CD4-positive, alpha-beta T cell (primary cell): ENCODE measurements at regions of chr6 and their contacts with region 1.

Region 1: GRCh38 chr6:73653571-73654424 is at the start of gene SLC17A5:
- DNase-seq: peak; percentile 71 to 95 (median 87)
- ATAC-seq: peak; percentile 85
- H3K4me3 ChIP-seq: peak within 1 kb of the TSS; percentile 94
- H3K4me3 Mint-ChIP-seq: peak within 1 kb of the TSS; percentile 99
- H3K27ac ChIP-seq: peak within 1 kb of the TSS; percentile 93 to 99
- H3K27ac Mint-ChIP-seq: peak within 1 kb of the TSS; percentile 95
- H3K4me1 ChIP-seq: peaks cover 15% of the 10 kb centered on the region
- H3K4me1 Mint-ChIP-seq: peaks cover 42% of the 10 kb centered on the region
- H3K27me3 ChIP-seq: no peaks in the 10 kb centered on the region
- H3K27me3 Mint-ChIP-seq: no peaks in the 10 kb centered on the region
- CTCF ChIP-seq: no peak
- total RNA-seq, gene SLC17A5: 5.3 to 6.2 TPM

Region 2: DNA sequence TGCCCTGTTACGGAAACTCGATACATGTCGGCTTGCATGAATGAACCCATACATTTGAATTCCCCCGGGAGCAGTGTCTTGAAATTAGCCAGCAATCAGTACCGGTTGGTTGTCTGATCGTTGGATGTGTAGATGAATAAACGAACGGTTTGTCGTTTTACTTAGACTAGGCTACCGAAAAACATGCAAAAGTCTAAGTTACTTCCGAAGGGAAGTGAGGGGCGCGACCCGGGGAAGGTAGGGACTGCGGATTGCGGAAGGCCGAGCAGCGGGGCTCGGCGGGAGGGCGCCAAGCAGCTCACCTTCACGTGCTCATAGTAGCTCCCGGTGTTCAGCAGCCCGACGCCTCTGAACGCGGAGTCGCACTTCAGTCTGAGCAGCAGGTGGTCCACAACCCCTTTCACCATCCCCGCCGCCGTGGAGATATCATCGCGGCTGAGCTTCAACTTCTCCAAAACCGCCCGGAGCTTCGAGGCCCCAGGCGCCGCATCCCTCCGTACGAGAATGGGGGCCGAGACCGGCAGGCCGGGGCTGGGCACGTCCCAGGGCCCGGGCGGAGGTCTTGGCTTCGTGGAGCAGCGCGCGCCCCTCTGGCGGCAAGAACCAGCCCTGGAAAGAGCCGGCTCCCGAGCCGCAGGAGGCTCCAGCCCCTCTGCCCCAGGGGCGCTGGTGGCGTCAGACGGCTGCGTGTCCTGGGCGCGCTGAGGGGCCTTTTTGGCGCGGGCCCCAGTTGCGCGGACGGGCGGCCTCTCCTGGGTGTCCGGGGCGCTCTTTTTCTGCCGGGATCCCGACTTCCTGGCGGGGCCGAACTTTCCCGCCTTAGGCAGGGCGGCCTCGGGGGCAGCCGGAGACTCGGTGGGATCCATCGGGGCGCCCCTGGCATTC is 202.3 kb before region 1 on chr6:
- CTCF ChIA-PET with region 1: no interaction called
- POLR2A ChIA-PET with region 1: interaction called, 13 read pairs
- intact Hi-C with region 1: no loop called
- DNase-seq: peak; percentile 9 to 74 (median 31)
- ATAC-seq: peak; percentile 53
- H3K4me3 ChIP-seq: peak overlapping the region; percentile 87
- H3K4me3 Mint-ChIP-seq: peak overlapping the region; percentile 92
- H3K27ac ChIP-seq: peak overlapping the region; percentile 69 to 85
- H3K27ac Mint-ChIP-seq: peak overlapping the region; percentile 86
- H3K4me1 ChIP-seq: peaks cover 54% of the 10 kb centered on the region
- H3K4me1 Mint-ChIP-seq: peaks cover 32% of the 10 kb centered on the region
- H3K27me3 ChIP-seq: no peaks in the 10 kb centered on the region
- H3K27me3 Mint-ChIP-seq: no peaks in the 10 kb centered on the region
- CTCF ChIP-seq: no peak

Region 3: DNA sequence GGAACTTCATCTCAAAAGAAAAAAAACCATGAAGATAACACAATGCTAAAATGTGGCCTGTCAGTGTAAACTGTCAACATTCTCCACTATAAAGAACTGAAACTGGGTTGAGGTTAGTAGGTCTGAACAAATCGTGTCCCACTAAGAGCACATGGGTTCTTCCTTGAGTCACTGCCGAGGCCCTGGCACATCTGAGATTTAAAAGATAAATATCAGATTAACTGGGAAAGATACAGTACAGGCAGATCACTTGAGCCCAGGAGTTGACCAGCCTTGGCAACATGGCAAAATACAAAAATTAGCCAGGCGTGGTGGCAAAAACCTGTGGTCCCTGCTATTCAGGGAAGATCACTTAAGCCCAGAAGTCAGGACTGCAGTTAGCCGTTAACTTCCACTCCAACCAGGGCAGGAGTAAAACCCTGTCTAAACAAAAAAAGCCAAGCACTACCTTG is 138.6 kb before region 1 on chr6:
- CTCF ChIA-PET with region 1: interaction called, 12 read pairs
- POLR2A ChIA-PET with region 1: interaction called, 140 read pairs
- intact Hi-C with region 1: loop called (anchors 1 to 2 kb)
- DNase-seq: peak in 3 of 14 experiments; percentile 28 to 48 (median 47)
- ATAC-seq: no peak
- H3K4me3 ChIP-seq: no peak overlapping the region
- H3K4me3 Mint-ChIP-seq: peak overlapping the region; percentile 81
- H3K27ac ChIP-seq: peak overlapping the region in 1 of 2 donors; percentile 16
- H3K27ac Mint-ChIP-seq: peak overlapping the region; percentile 87
- H3K4me1 ChIP-seq: peaks cover 47% of the 10 kb centered on the region
- H3K4me1 Mint-ChIP-seq: peaks cover 59% of the 10 kb centered on the region
- H3K27me3 ChIP-seq: no peaks in the 10 kb centered on the region
- H3K27me3 Mint-ChIP-seq: no peaks in the 10 kb centered on the region
- CTCF ChIP-seq: no peak

Region 4: GRCh38 chr6:73585566-73586415 is 68.0 kb before region 1 on chr6:
- CTCF ChIA-PET with region 1: interaction called, 4 read pairs
- POLR2A ChIA-PET with region 1: interaction called, 10 read pairs
- intact Hi-C with region 1: no loop called
- DNase-seq: peak in 8 of 14 experiments; percentile 6 to 87 (median 36)
- ATAC-seq: peak; percentile 86
- H3K4me3 ChIP-seq: peak overlapping the region; percentile 48
- H3K4me3 Mint-ChIP-seq: peak overlapping the region; percentile 75
- H3K27ac ChIP-seq: peak overlapping the region; percentile 89 to 93
- H3K27ac Mint-ChIP-seq: peak overlapping the region; percentile 98
- H3K4me1 ChIP-seq: peaks cover 15% of the 10 kb centered on the region
- H3K4me1 Mint-ChIP-seq: peaks cover 20% of the 10 kb centered on the region
- H3K27me3 ChIP-seq: no peaks in the 10 kb centered on the region
- H3K27me3 Mint-ChIP-seq: no peaks in the 10 kb centered on the region
- CTCF ChIP-seq: no peak

Region 5: GRCh38 chr6:75243333-75244062 is 1589.7 kb after region 1 on chr6 and contains the start of gene COX7A2:
- CTCF ChIA-PET with region 1: no interaction called
- POLR2A ChIA-PET with region 1: interaction called, 5 read pairs
- intact Hi-C with region 1: loop called in 1 of 2 experiments (anchors 10 kb)
- DNase-seq: peak; percentile 73 to 96 (median 78)
- ATAC-seq: peak; percentile 95
- H3K4me3 ChIP-seq: peak within 1 kb of the TSS; percentile 88
- H3K4me3 Mint-ChIP-seq: peak within 1 kb of the TSS; percentile 99
- H3K27ac ChIP-seq: peak within 1 kb of the TSS; percentile 87 to 97
- H3K27ac Mint-ChIP-seq: peak within 1 kb of the TSS; percentile 95
- H3K4me1 ChIP-seq: peaks cover 24% of the 10 kb centered on the region
- H3K4me1 Mint-ChIP-seq: peaks cover 40% of the 10 kb centered on the region
- H3K27me3 ChIP-seq: no peaks in the 10 kb centered on the region
- H3K27me3 Mint-ChIP-seq: peaks cover 17% of the 10 kb centered on the region
- CTCF ChIP-seq: no peak
- total RNA-seq, gene COX7A2: 189 to 195 TPM

Region 6: GRCh38 chr6:75284632-75285286 is 1631.0 kb after region 1 on chr6 and contains the start of gene TMEM30A:
- CTCF ChIA-PET with region 1: interaction called, 3 read pairs
- POLR2A ChIA-PET with region 1: interaction called, 13 read pairs
- intact Hi-C with region 1: loop called in 1 of 2 experiments (anchors 2 kb)
- DNase-seq: peak; percentile 90 to 100 (median 95)
- ATAC-seq: peak; percentile 96
- H3K4me3 ChIP-seq: peak within 1 kb of the TSS; percentile 78
- H3K4me3 Mint-ChIP-seq: no peak within 1 kb of the TSS
- H3K27ac ChIP-seq: peak within 1 kb of the TSS; percentile 76 to 85
- H3K27ac Mint-ChIP-seq: no peak within 1 kb of the TSS
- H3K4me1 ChIP-seq: peaks cover 9% of the 10 kb centered on the region
- H3K4me1 Mint-ChIP-seq: peaks cover 47% of the 10 kb centered on the region
- H3K27me3 ChIP-seq: no peaks in the 10 kb centered on the region
- H3K27me3 Mint-ChIP-seq: no peaks in the 10 kb centered on the region
- CTCF ChIP-seq: no peak
- total RNA-seq, gene TMEM30A: 29.8 to 33.2 TPM

Region 7: GRCh38 chr6:75601304-75602245 is 1947.8 kb after region 1 on chr6 and contains the start of gene SENP6:
- CTCF ChIA-PET with region 1: no interaction called
- POLR2A ChIA-PET with region 1: interaction called, 9 read pairs
- intact Hi-C with region 1: loop called in 1 of 2 experiments (anchors 5 kb)
- DNase-seq: peak; percentile 51 to 91 (median 69)
- ATAC-seq: peak; percentile 72
- H3K4me3 ChIP-seq: peak within 1 kb of the TSS; percentile 73
- H3K4me3 Mint-ChIP-seq: peak within 1 kb of the TSS; percentile 96
- H3K27ac ChIP-seq: peak within 1 kb of the TSS; percentile 92 to 96
- H3K27ac Mint-ChIP-seq: peak within 1 kb of the TSS; percentile 99
- H3K4me1 ChIP-seq: peaks cover 36% of the 10 kb centered on the region
- H3K4me1 Mint-ChIP-seq: peaks cover 73% of the 10 kb centered on the region
- H3K27me3 ChIP-seq: no peaks in the 10 kb centered on the region
- H3K27me3 Mint-ChIP-seq: no peaks in the 10 kb centered on the region
- CTCF ChIP-seq: no peak
- total RNA-seq, gene SENP6: 82.0 to 94.8 TPM